ENCODE measurements at regions of chr6 and their contacts with region 1.

Region 1: DNA sequence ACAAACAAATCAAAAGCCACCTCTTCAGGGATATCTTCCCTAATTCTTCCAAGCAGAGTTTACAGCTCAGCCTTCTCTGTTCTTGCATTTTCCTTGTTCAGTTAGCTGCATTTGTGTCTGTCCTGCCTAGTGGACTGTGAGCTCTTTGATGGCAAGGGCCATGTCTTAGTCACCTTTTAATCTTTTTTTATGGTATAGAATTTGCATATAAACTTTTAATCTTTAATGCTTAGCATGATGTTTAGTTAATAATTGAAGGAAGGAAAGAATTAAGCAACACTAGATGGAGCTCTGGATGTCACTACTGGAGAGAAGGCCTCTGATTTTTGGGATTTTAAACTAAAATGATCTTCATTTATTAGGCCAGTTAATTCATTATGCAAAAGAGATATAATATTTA is 12.1 kb downstream of the PPP2R5D start:
- DNase-seq: no peak
- H3K4me3 Mint-ChIP-seq: no peak overlapping the region
- H3K27ac Mint-ChIP-seq: no peak overlapping the region
- H3K4me1 Mint-ChIP-seq: no peaks in the 10 kb centered on the region
- H3K27me3 Mint-ChIP-seq: no peaks in the 10 kb centered on the region
- CTCF ChIP-seq: no peak

Region 2: GRCh38 chr6:42819803-42820511 is 176.6 kb before region 1 on chr6:
- CTCF ChIA-PET with region 1: no interaction called
- POLR2A ChIA-PET with region 1: no interaction called
- intact Hi-C with region 1: no loop called
- DNase-seq: no peak
- H3K4me3 Mint-ChIP-seq: no peak overlapping the region
- H3K27ac Mint-ChIP-seq: no peak overlapping the region
- H3K4me1 Mint-ChIP-seq: peaks cover 10% of the 10 kb centered on the region
- H3K27me3 Mint-ChIP-seq: no peaks in the 10 kb centered on the region
- CTCF ChIP-seq: no peak

Region 3: DNA sequence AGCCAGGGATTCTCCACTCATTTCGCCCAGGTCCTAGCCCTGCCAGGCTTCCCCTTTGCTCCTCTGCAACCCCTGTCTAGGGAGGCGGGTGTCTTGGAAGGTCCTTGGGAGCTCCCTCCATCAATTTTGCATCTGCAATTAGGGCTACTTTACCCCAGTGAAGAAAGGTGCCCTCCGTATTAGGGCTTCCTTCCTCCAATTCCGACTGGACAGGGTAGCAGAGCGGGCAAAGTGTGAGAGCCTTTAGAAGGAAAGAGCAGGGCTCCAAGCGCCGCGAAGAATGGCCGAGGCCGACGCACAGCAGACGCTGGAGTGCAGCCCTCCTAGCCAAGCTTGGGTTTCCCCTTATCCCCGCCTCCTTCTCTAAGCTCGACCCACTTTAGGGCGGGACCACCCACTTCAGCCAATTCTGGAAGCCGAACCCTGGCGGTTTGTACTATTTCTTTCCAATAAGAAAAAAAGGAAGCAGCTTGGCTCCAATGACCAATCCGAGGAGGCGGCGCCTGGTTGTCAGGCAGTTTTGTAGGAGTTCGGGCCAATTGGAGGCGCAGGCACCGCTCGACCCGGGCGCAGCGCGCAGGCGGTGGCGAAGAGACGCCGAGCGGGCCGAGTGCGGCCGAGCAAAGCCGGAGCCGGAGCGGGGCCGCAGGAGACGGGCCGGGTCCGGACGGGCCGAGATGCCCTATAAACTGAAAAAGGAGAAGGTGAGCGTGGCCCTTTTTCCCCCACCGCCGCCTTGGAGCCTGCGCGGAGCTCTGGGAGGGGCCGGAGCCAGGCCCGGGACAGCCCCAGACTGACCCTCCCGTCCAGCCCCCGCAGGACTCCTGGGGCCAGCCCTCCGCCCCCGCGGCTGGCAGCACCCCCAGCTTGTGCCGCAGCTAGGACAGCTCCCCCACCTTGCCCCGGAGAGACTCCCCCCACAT is 12.3 kb before region 1 on chr6 and contains the start of gene PPP2R5D:
- CTCF ChIA-PET with region 1: interaction called, 3 read pairs
- POLR2A ChIA-PET with region 1: interaction called, 11 read pairs
- intact Hi-C with region 1: no loop called
- DNase-seq: peak; percentile 99
- H3K4me3 Mint-ChIP-seq: peak within 1 kb of the TSS; percentile 78
- H3K27ac Mint-ChIP-seq: peak within 1 kb of the TSS; percentile 90
- H3K4me1 Mint-ChIP-seq: peaks cover 39% of the 10 kb centered on the region
- H3K27me3 Mint-ChIP-seq: no peaks in the 10 kb centered on the region
- CTCF ChIP-seq: no peak
- total RNA-seq, gene PPP2R5D: 16.5 and 17.9 TPM in 2 replicates